Adrenal gland (tissue), 19 donors: ENCODE measurements at regions of chr16 and their contacts with region 1.

Region 1: GRCh38 chr16:2251483-2252240 is at the start of gene ECI1:
- DNase-seq: peak; percentile 97 to 98 (median 98)
- H3K4me3 ChIP-seq: peak within 1 kb of the TSS in 2 of 4 donors; percentile 14 to 91
- H3K27ac ChIP-seq: peak within 1 kb of the TSS; percentile 57 to 98 (median 88)
- H3K4me1 ChIP-seq: peaks cover 19 to 23% of the 10 kb centered on the region in 2 donors
- H3K27me3 ChIP-seq: no peaks in the 10 kb centered on the region
- CTCF ChIP-seq: peak; percentile 66 to 94 (median 72)
- POLR2A ChIP-seq: peak; percentile 59 to 92
- total RNA-seq, gene ECI1: 34.7 to 80.2 (median 57.8) TPM

Region 2: GRCh38 chr16:2047330-2048115 is 204.1 kb before region 1 on chr16 and contains the starts of genes NTHL1 and TSC2:
- intact Hi-C with region 1: no loop called
- DNase-seq: peak; percentile 96 to 99 (median 97)
- H3K4me3 ChIP-seq: peak within 1 kb of the TSS; percentile 9 to 92 (median 75)
- H3K27ac ChIP-seq: peak within 1 kb of the TSS in 3 of 5 donors; percentile 40 to 81 (median 52)
- H3K4me1 ChIP-seq: peaks cover 6 to 18% of the 10 kb centered on the region in 2 donors
- H3K27me3 ChIP-seq: no peaks in the 10 kb centered on the region
- CTCF ChIP-seq: peak; percentile 17 to 72 (median 34)
- POLR2A ChIP-seq: peak; percentile 22 to 26
- total RNA-seq, gene NTHL1: 7.9 to 35.7 (median 14.9) TPM
- total RNA-seq, gene TSC2: 18.6 to 148 (median 92.0) TPM

Region 3: DNA sequence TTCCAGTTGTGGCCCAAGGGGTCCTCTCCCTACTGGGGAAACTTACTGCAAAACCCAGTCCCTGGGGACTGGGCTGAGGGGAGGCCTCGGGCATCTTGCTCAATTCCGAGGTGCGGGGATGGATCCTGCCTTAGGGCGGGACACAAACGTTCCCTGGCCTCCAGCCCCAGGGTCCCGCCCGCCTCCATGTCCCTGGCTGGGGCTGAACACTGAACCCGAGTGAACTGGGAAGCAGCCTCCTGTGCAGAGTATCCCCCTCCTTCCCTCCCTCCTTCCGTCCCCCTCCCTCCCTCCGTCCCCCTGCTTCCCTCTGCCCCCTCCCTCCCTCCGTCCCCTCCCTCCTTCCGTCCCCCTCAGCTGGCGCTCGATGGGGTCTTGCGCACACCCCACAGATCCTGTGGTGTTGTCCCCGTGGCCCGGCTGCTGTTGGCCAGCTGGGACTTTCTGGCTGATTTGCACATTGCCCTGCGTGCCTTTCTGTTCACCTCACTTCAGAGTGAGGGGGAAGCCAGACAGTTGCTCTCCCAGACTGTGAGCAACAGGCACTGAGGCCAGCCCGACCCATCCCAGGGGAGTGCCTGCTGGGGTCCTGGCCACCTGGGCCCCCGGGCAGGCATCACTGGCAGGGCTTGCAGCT is 90.6 kb before region 1 on chr16:
- intact Hi-C with region 1: loop called in 1 of 2 experiments (anchors 10 kb)
- DNase-seq: no peak
- H3K4me3 ChIP-seq: no peak overlapping the region
- H3K27ac ChIP-seq: peak overlapping the region in 2 of 5 donors; percentile 52 to 96
- H3K4me1 ChIP-seq: peaks cover 14 to 46% of the 10 kb centered on the region in 2 donors
- H3K27me3 ChIP-seq: no peaks in the 10 kb centered on the region
- CTCF ChIP-seq: no peak
- POLR2A ChIP-seq: no peak